PC-3 (cell line): ENCODE measurements at regions of chr5 and their contacts with region 1.

Region 1: GRCh38 chr5:110716247-110717245 is 9.9 kb downstream of the TMEM232 start:
- DNase-seq: no peak
- ATAC-seq: peak; percentile 35; the same call in 1 of the 2 replicates
- H3K4me3 ChIP-seq: no peak overlapping the region
- H3K27ac ChIP-seq: no peak overlapping the region
- H3K4me1 ChIP-seq: no peaks in the 10 kb centered on the region
- H3K27me3 ChIP-seq: peaks cover 9% of the 10 kb centered on the region; the same call in 1 of the 2 replicates
- CTCF ChIP-seq: 0 out of 2 replicates have a peak, but pooled peaks have one; percentile 29

Region 2: GRCh38 chr5:110612778-110613396 is 103.7 kb before region 1 on chr5:
- CTCF ChIA-PET with region 1: interaction called, 4 read pairs
- POLR2A ChIA-PET with region 1: interaction called, 3 read pairs
- intact Hi-C with region 1: loop called (anchors 5 kb)
- DNase-seq: peak; percentile 28
- ATAC-seq: peak; percentile 74
- H3K4me3 ChIP-seq: no peak overlapping the region
- H3K27ac ChIP-seq: no peak overlapping the region
- H3K4me1 ChIP-seq: no peaks in the 10 kb centered on the region
- H3K27me3 ChIP-seq: peaks cover 17% of the 10 kb centered on the region
- CTCF ChIP-seq: no peak

Region 3: DNA sequence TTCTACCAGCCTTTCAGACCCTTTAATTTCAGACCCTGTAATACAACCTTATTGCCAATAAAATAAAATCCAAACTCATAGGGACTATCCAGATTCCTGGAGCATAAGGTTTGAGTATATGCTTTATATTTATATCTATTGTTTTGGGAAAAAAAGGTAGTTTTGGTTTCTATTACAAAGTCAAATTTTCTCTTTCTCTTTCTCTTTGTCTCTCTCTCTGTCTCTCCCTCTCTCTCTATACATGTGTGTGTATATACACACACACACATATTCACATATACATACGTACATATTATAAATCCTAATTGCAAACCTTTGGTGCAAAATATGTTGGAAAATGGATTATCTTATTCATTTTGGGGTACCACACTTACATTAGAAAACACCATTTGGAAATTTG is 29.1 kb before region 1 on chr5:
- CTCF ChIA-PET with region 1: interaction called, 10 read pairs
- POLR2A ChIA-PET with region 1: no interaction called
- intact Hi-C with region 1: no loop called
- DNase-seq: no peak
- ATAC-seq: no peak
- H3K4me3 ChIP-seq: no peak overlapping the region
- H3K27ac ChIP-seq: no peak overlapping the region
- H3K4me1 ChIP-seq: no peaks in the 10 kb centered on the region
- H3K27me3 ChIP-seq: peaks cover 3% of the 10 kb centered on the region; the same call in 1 of the 2 replicates
- CTCF ChIP-seq: no peak